Activated naive CD8-positive, alpha-beta T cell treated with anti-CD3 and anti-CD28 coated beads, Interleukin-2, amount 10 ng/mL, durations not matched to agents 7 days and 5 days (primary cell): ENCODE measurements at regions of chr19 and their contacts with region 1.

Region 1: DNA sequence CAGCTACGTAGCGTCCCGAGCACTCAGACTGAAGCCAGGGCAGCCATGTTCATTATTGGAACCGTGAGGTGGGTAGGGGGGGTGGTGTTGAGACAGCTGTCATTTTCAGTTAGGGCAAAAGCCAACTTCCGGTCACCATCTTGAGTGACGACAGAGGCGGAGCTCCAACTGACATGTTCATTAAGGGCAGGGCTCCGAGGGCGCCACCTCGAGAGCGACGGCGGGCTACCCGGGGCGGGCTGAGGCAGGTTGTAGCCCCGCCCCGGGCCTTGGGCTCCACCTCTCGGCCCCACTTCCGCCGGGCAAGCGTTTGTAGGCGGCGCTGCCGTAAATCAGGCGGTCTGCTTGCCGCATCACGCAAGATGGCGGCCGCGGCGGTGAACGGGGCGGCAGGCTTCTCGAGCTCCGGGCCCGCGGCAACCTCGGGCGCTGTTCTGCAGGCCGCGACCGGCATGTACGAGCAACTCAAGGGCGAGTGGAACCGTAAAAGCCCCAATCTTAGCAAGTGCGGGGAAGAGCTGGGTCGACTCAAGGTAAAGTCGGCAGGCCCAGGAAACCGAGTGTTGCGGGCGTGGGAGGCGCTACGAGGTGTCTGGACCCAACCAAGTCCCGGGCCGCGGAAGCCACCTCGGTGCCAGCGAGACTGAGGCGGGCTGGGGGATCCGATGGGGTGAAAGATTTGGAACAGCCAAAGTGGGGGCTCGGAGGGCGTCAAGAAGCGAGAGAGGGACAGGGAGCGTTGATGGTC is at the start of gene PSMD8:
- DNase-seq: peak; percentile 98
- ATAC-seq: peak; percentile 97
- H3K4me3 Mint-ChIP-seq: peak within 1 kb of the TSS; percentile 99
- H3K27ac Mint-ChIP-seq: peak within 1 kb of the TSS; percentile 98
- H3K4me1 Mint-ChIP-seq: peaks cover 23% of the 10 kb centered on the region
- H3K27me3 Mint-ChIP-seq: peaks cover 2% of the 10 kb centered on the region
- total RNA-seq, gene PSMD8: 127 to 131 TPM

Region 2: GRCh38 chr19:38263689-38264485 is 110.7 kb before region 1 on chr19:
- POLR2A ChIA-PET with region 1: interaction called, 14 read pairs
- DNase-seq: peak; percentile 88
- ATAC-seq: peak; percentile 77
- H3K4me3 Mint-ChIP-seq: peak overlapping the region; percentile 82
- H3K27ac Mint-ChIP-seq: peak overlapping the region; percentile 89
- H3K4me1 Mint-ChIP-seq: peaks cover 22% of the 10 kb centered on the region
- H3K27me3 Mint-ChIP-seq: no peaks in the 10 kb centered on the region

Region 3: GRCh38 chr19:38335949-38336637 is 38.5 kb before region 1 on chr19:
- POLR2A ChIA-PET with region 1: interaction called, 26 read pairs
- DNase-seq: peak; percentile 92
- ATAC-seq: peak; percentile 78
- H3K4me3 Mint-ChIP-seq: peak overlapping the region; percentile 93
- H3K27ac Mint-ChIP-seq: peak overlapping the region; percentile 96
- H3K4me1 Mint-ChIP-seq: peaks cover 11% of the 10 kb centered on the region
- H3K27me3 Mint-ChIP-seq: no peaks in the 10 kb centered on the region

Region 4: GRCh38 chr19:38387550-38388348 is 13.1 kb after region 1 on chr19 and contains the start of gene GGN:
- POLR2A ChIA-PET with region 1: interaction called, 18 read pairs
- DNase-seq: peak; percentile 79
- ATAC-seq: peak; percentile 74
- H3K4me3 Mint-ChIP-seq: peak within 1 kb of the TSS; percentile 93
- H3K27ac Mint-ChIP-seq: no peak within 1 kb of the TSS
- H3K4me1 Mint-ChIP-seq: peaks cover 11% of the 10 kb centered on the region
- H3K27me3 Mint-ChIP-seq: peaks cover 38% of the 10 kb centered on the region
- total RNA-seq, gene GGN: not detected